ENCODE measurements at regions of chr11 and their contacts with region 1.

Region 1: GRCh38 chr11:64846998-64847666 is 2.7 kb upstream of the CDC42BPG start:
- DNase-seq: peak; percentile 91 to 96 (median 92)
- ATAC-seq: peak; percentile 84
- H3K4me3 ChIP-seq: no peak overlapping the region
- H3K27ac ChIP-seq: no peak overlapping the region; the same call in 2 of the 3 replicates
- H3K4me1 ChIP-seq: peaks cover 54 to 82% of the 10 kb centered on the region in 2 experiments
- H3K27me3 ChIP-seq: no peaks in the 10 kb centered on the region; a peak in 1 of 5 replicates
- CTCF ChIP-seq: peak; percentile 94 to 99 (median 98)
- EP300 ChIP-seq: no peak
- POLR2A ChIP-seq: no peak
- RAD21 ChIP-seq: peak; percentile 98 to 99

Region 2: GRCh38 chr11:64803163-64803845 is 43.8 kb before region 1 on chr11 and contains the start of gene MAP4K2:
- CTCF ChIA-PET with region 1: interaction called, 3 read pairs
- POLR2A ChIA-PET with region 1: no interaction called
- in situ Hi-C with region 1: no loop called
- intact Hi-C with region 1: loop called (anchors 5 kb)
- DNase-seq: peak; percentile 88 to 98 (median 98)
- ATAC-seq: peak; percentile 94
- H3K4me3 ChIP-seq: peak within 1 kb of the TSS; percentile 55
- H3K27ac ChIP-seq: peak within 1 kb of the TSS; percentile 39
- H3K4me1 ChIP-seq: peaks cover 30 to 62% of the 10 kb centered on the region in 2 experiments
- H3K27me3 ChIP-seq: no peaks in the 10 kb centered on the region
- CTCF ChIP-seq: peak; percentile 37 to 81 (median 55); a peak in 4 of 6 replicates
- EP300 ChIP-seq: no peak
- POLR2A ChIP-seq: peak; percentile 43
- RAD21 ChIP-seq: peak in 1 of 2 experiments; percentile 26; a peak in 2 of 4 replicates
- polyA plus RNA-seq, gene MAP4K2: 0.13 to 0.39 TPM

Region 3: GRCh38 chr11:64878494-64879243 is 31.5 kb after region 1 on chr11 and contains the start of gene EHD1:
- CTCF ChIA-PET with region 1: no interaction called
- POLR2A ChIA-PET with region 1: interaction called, 26 read pairs
- in situ Hi-C with region 1: no loop called
- intact Hi-C with region 1: no loop called
- DNase-seq: peak; percentile 99 to 100 (median 99)
- ATAC-seq: peak; percentile 93
- H3K4me3 ChIP-seq: peak within 1 kb of the TSS; percentile 71
- H3K27ac ChIP-seq: peak within 1 kb of the TSS; percentile 88
- H3K4me1 ChIP-seq: peaks cover 26 to 60% of the 10 kb centered on the region in 2 experiments
- H3K27me3 ChIP-seq: no peaks in the 10 kb centered on the region
- CTCF ChIP-seq: peak; percentile 65 to 93 (median 90); a peak in 5 of 6 replicates
- EP300 ChIP-seq: 0 out of 2 replicates have a peak, but pooled peaks have one; percentile 13
- POLR2A ChIP-seq: peak; percentile 91
- RAD21 ChIP-seq: peak; percentile 38 to 42; a peak in 1 of 4 replicates
- polyA plus RNA-seq, gene EHD1: 0.46 to 0.59 TPM

Region 4: DNA sequence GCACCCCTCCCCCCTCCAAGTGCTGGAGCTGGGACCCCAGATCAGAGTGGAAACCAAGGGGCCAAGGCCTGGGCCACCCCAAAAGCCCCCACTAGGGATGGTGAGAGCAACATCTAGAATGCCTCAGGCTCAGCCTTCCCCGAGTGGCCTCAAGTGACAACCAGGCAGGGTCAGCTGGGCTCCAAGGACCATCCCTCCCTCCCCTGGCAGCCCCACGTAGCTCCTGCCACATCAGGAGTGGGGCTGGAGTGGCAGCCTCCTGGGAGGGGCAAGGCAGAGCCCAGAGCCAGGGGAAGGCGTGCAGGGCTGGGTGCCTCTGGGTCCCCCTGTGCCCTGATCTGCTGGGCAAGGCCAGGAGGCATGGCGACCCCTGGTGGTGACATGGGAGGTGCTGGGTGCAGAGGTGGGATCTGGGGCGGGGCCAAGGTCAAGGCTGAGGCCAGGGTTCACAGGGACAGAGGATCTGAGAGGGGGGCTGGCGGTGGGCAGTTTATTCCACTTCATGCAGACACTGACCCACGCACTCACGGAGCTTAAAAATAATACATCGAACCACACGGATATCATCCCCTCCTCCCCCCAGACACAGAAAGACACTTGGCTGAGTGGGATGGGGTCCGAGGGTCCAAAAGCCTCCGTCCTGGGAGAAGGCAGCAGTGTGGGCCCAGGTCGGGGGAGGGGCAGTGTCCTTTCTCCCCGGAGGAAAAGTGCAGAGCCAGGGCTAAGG is 47.1 kb after region 1 on chr11:
- CTCF ChIA-PET with region 1: interaction called, 39 read pairs
- POLR2A ChIA-PET with region 1: interaction called, 7 read pairs
- in situ Hi-C with region 1: loop called (anchors 5 kb)
- intact Hi-C with region 1: loop called (anchors 1 kb)
- DNase-seq: peak; percentile 84 to 91 (median 87)
- ATAC-seq: peak; percentile 93
- H3K4me3 ChIP-seq: no peak overlapping the region
- H3K27ac ChIP-seq: no peak overlapping the region; the same call in 2 of the 3 replicates
- H3K4me1 ChIP-seq: peaks cover 14 to 73% of the 10 kb centered on the region in 2 experiments; a peak in 4 of 5 replicates
- H3K27me3 ChIP-seq: no peaks in the 10 kb centered on the region
- CTCF ChIP-seq: peak; percentile 92 to 97 (median 95)
- EP300 ChIP-seq: no peak; the same call in 1 of the 2 replicates
- POLR2A ChIP-seq: no peak; the same call in 1 of the 2 replicates
- RAD21 ChIP-seq: peak; percentile 92 to 93

Region 5: GRCh38 chr11:65013692-65014145 is 166.6 kb after region 1 on chr11:
- CTCF ChIA-PET with region 1: interaction called, 6 read pairs
- POLR2A ChIA-PET with region 1: interaction called, 7 read pairs
- in situ Hi-C with region 1: no loop called
- intact Hi-C with region 1: loop called (anchors 1 kb)
- DNase-seq: peak; percentile 87 to 95 (median 92)
- ATAC-seq: peak; percentile 86
- H3K4me3 ChIP-seq: peak overlapping the region; percentile 67
- H3K27ac ChIP-seq: peak overlapping the region; percentile 93
- H3K4me1 ChIP-seq: peaks cover 10 to 39% of the 10 kb centered on the region in 2 experiments; a peak in 4 of 5 replicates
- H3K27me3 ChIP-seq: no peaks in the 10 kb centered on the region
- CTCF ChIP-seq: peak; percentile 39 to 79 (median 43); a peak in 4 of 6 replicates
- EP300 ChIP-seq: no peak
- POLR2A ChIP-seq: peak; percentile 67; the same call in 1 of the 2 replicates
- RAD21 ChIP-seq: peak; percentile 88 to 89; a peak in 2 of 4 replicates

Region 6: DNA sequence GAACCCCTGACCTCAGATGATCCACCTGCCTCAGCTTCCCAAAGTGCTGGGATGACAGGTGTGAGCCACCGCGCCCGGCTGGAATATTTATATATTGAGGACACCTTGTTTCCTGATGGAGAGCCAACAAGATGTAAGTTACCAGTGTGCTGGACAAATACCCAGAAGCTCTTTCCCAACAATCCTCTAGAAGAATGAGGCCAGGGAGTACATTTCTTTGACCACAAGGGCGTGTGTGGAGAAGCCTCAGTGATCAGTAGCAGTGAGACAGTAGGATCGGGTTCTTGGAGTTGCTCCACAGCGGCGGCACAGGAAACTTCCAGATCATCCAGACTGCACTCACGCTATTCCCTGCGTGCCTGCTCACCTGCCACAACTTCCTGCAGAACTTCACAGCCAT is 404.3 kb after region 1 on chr11:
- CTCF ChIA-PET with region 1: no interaction called
- POLR2A ChIA-PET with region 1: no interaction called
- in situ Hi-C with region 1: no loop called
- intact Hi-C with region 1: loop called (anchors 10 kb)
- DNase-seq: no peak
- ATAC-seq: no peak
- H3K4me3 ChIP-seq: no peak overlapping the region
- H3K27ac ChIP-seq: no peak overlapping the region
- H3K4me1 ChIP-seq: no peaks in the 10 kb centered on the region; a peak in 1 of 5 replicates
- H3K27me3 ChIP-seq: no peaks in the 10 kb centered on the region
- CTCF ChIP-seq: no peak
- EP300 ChIP-seq: no peak
- POLR2A ChIP-seq: no peak
- RAD21 ChIP-seq: no peak

Region 7: DNA sequence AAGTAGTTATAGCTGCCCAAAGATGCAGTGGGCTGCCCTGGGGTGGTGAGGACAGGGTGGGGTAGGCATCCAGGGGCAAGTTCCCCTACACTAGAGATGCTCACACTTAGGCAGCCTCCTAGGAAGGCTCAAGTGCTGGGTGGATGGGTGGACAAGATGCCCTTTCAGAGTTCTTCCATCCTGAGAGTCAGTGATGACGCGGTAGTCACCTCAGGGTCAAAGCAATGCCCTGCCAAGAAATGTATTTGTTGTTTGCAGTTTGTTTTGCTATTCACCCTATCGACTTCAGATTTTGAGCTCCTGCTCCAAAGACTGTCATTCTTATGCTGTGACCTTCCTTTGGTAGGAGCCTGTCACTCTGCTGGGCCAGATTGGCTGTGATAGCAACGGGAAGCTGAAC is 433.5 kb after region 1 on chr11:
- CTCF ChIA-PET with region 1: no interaction called
- POLR2A ChIA-PET with region 1: no interaction called
- in situ Hi-C with region 1: no loop called
- intact Hi-C with region 1: no loop called
- DNase-seq: no peak
- ATAC-seq: no peak
- H3K4me3 ChIP-seq: no peak overlapping the region
- H3K27ac ChIP-seq: no peak overlapping the region
- H3K4me1 ChIP-seq: peaks cover 0 to 5% of the 10 kb centered on the region in 2 experiments; a peak in 3 of 5 replicates
- H3K27me3 ChIP-seq: no peaks in the 10 kb centered on the region
- CTCF ChIP-seq: no peak
- EP300 ChIP-seq: no peak
- POLR2A ChIP-seq: no peak
- RAD21 ChIP-seq: no peak